SK-N-SH (cell line): ENCODE measurements at regions of chr1 and their contacts with region 1.

Region 1: GRCh38 chr1:207797229-207797961 is 45.5 kb downstream of the CD46 start:
- DNase-seq: peak; percentile 68
- H3K4me3 ChIP-seq: peak overlapping the region in 1 of 2 experiments; percentile 4; a peak in 1 of 4 replicates
- H3K27ac ChIP-seq: peak overlapping the region in 1 of 2 experiments; percentile 34; a peak in 1 of 4 replicates
- H3K4me1 ChIP-seq: peaks cover 0 to 4% of the 10 kb centered on the region in 2 experiments; a peak in 2 of 4 replicates
- H3K27me3 ChIP-seq: no peaks in the 10 kb centered on the region
- CTCF ChIP-seq: peak; percentile 89
- EP300 ChIP-seq: no peak
- RAD21 ChIP-seq: peak; percentile 83

Region 2: GRCh38 chr1:207619871-207620542 is 177.4 kb before region 1 on chr1:
- CTCF ChIA-PET with region 1: interaction called, 16 read pairs
- POLR2A ChIA-PET with region 1: no interaction called
- DNase-seq: peak; percentile 45
- H3K4me3 ChIP-seq: no peak overlapping the region
- H3K27ac ChIP-seq: no peak overlapping the region
- H3K4me1 ChIP-seq: no peaks in the 10 kb centered on the region
- H3K27me3 ChIP-seq: no peaks in the 10 kb centered on the region; the same call in 1 of the 2 replicates
- CTCF ChIP-seq: peak; percentile 71
- EP300 ChIP-seq: no peak
- RAD21 ChIP-seq: peak; percentile 25; the same call in 1 of the 2 replicates

Region 3: GRCh38 chr1:207742850-207743555 is 54.4 kb before region 1 on chr1:
- CTCF ChIA-PET with region 1: interaction called, 11 read pairs
- POLR2A ChIA-PET with region 1: no interaction called
- DNase-seq: no peak
- H3K4me3 ChIP-seq: no peak overlapping the region
- H3K27ac ChIP-seq: no peak overlapping the region
- H3K4me1 ChIP-seq: no peaks in the 10 kb centered on the region; a peak in 1 of 4 replicates
- H3K27me3 ChIP-seq: no peaks in the 10 kb centered on the region
- CTCF ChIP-seq: no peak
- EP300 ChIP-seq: no peak
- RAD21 ChIP-seq: no peak

Region 4: GRCh38 chr1:207779008-207779407 is 18.4 kb before region 1 on chr1:
- CTCF ChIA-PET with region 1: interaction called, 10 read pairs
- POLR2A ChIA-PET with region 1: no interaction called
- DNase-seq: no peak
- H3K4me3 ChIP-seq: no peak overlapping the region
- H3K27ac ChIP-seq: no peak overlapping the region
- H3K4me1 ChIP-seq: no peaks in the 10 kb centered on the region
- H3K27me3 ChIP-seq: no peaks in the 10 kb centered on the region
- CTCF ChIP-seq: no peak
- EP300 ChIP-seq: no peak
- RAD21 ChIP-seq: no peak

Region 5: DNA sequence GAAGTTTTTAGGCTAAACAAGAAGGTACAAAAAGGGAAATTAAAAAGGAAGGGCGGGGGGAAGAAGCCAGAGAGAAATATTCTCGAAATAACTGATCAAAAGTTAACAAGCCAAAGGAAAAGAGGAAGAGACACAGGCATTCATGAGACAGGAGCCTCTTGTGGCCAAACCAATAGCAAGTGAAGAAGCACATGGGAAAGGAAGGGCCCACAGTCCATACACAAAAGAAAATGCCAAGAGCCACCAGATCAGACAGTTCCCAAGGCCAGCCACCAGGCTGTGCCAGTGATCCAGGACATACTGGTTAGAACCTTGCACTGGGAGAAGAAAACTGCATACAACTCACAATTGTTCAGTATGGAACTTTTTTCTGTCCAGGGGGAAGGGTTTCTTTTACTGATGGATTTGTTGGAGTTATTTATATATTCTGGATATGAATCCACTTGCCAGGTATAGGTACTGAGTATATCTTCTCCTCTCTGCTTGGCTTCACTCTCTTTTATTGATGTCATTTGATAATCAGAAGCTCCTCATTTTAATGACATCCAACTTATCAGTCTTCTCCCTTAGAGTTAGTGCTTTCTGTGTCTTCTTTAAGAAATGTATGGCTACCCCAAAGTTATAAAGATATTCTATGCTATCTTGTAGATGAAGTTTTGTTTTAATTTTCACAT is 31.2 kb after region 1 on chr1:
- CTCF ChIA-PET with region 1: interaction called, 14 read pairs
- POLR2A ChIA-PET with region 1: interaction called, 4 read pairs
- DNase-seq: peak; percentile 64
- H3K4me3 ChIP-seq: no peak overlapping the region
- H3K27ac ChIP-seq: no peak overlapping the region
- H3K4me1 ChIP-seq: peaks cover 0 to 18% of the 10 kb centered on the region in 2 experiments; a peak in 2 of 4 replicates
- H3K27me3 ChIP-seq: no peaks in the 10 kb centered on the region
- CTCF ChIP-seq: peak; percentile 69
- EP300 ChIP-seq: no peak
- RAD21 ChIP-seq: peak; percentile 80